AG04449 (cell line): ENCODE measurements at regions of chr14 and their contacts with region 1.

Region 1: DNA sequence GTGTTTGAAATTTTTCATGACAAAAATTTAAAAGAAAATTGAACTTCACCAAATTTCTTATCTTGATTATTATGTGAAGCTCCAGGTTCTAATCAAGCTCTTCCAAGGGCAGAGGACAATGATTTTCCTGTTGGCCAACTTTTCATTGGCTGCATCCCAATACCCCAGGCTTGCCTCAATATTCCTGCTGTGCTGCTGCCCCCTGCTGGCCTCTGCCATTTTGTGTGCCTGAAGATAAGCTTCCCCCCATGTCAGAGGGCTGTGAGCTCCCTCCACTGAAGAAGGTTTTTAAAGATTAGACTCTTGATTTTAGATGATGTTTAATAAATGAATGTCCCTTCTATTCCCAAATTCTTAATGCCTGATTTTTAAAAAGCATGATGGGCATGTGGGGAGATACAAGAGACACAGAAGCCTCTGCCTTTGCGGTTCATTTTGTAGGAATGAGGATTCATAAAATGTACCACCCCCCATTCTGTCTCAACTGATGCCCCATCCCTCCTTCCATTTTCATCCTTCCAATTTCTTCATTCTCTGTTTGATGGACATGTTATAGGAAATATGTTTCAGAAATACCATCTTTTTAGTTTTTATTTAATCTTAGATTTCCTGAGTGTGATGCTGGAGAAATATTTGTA is 76.7 kb upstream of the RGS6 start:
- DNase-seq: peak; percentile 4
- H3K4me3 ChIP-seq: no peak overlapping the region
- CTCF ChIP-seq: peak; percentile 83

Region 2: DNA sequence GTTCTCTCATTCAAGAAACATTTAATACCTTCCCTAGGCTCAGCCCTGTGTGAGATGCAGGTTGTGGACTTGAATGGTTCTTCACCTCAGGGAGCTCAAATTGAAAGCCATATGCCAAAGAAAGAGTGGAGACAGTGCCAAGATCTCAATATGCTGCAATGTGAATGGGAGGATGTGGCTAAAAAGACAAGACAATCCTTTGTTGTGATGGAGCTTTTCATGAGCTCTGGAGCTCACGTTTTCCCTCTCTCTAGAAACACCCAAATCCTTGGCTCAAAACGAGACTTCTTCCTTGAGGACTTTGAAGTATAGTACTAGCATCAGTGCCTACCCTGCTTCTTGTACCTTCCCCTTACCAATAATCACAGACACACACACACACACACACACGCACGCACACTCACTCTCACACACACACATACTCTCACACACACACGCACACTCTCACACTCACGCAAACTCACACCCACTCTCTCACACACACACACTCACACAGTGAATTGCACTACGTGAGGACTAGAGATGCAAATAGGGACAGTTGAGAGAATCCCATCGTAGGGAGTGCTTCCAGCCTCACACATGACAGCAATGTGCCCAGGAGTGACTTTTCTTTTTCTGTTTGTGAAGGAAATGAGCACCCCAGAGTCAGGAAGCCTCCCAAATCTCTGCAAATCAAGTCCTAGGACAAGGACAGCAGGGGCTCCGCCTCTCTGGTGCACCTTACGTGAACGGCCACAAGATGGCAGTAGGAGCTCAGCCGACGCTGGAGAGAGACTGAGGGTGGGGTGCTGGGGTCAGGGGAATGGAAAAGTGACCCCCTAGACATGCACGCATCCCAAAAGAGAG is 716.8 kb before region 1 on chr14:
- CTCF ChIA-PET with region 1: interaction called, 29 read pairs
- POLR2A ChIA-PET with region 1: no interaction called
- DNase-seq: no peak
- H3K4me3 ChIP-seq: no peak overlapping the region
- CTCF ChIP-seq: peak; percentile 91

Region 3: DNA sequence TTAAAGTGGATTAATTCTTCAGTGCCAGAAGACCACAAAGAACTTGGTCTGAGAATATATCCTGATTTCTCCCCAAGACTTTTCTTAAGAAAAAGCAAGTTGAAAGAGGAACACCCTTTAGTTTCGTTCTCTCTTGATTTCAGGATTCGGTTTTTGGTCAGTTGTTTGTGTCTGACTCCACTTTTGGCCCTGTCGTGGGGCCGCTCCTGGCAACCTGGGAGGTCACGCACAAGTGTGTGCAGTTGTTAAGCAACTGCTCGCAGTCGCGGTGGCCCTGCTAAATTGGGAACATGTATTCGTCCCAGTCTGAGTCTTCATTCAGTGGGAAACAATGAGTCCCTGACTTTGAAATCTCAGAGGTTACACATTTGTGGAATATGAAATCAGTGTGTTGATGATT is 145.4 kb after region 1 on chr14:
- CTCF ChIA-PET with region 1: no interaction called
- POLR2A ChIA-PET with region 1: no interaction called
- DNase-seq: no peak
- H3K4me3 ChIP-seq: no peak overlapping the region
- CTCF ChIP-seq: no peak

Region 4: DNA sequence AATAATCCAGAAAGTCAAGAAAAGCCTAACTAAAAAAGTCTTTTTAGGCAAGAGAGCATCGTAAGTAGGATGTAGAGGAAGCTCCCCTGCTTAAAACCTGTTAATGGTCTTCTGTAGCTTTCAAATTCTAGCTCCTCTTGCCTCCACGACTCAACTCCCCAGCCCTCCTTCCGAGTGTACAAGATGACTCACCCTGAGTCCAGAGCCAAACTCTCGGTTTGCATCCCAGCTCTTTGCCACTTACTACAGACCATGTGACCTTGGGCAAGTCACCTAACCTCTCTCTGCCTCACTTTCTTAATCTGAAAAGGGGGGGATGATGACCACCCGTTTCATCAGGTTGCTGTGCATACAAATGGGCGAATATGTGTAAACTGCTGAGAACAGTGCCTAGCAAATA is 578.0 kb after region 1 on chr14:
- CTCF ChIA-PET with region 1: no interaction called
- POLR2A ChIA-PET with region 1: no interaction called
- DNase-seq: no peak
- H3K4me3 ChIP-seq: no peak overlapping the region
- CTCF ChIP-seq: no peak